Head of caudate nucleus (tissue), 42 donors: ENCODE measurements at regions of chr19 and their contacts with region 1.

Region 1: GRCh38 chr19:50329146-50329925 is at the start of gene KCNC3:
- DNase-seq: peak; percentile 98 to 100 (median 100)

Region 2: DNA sequence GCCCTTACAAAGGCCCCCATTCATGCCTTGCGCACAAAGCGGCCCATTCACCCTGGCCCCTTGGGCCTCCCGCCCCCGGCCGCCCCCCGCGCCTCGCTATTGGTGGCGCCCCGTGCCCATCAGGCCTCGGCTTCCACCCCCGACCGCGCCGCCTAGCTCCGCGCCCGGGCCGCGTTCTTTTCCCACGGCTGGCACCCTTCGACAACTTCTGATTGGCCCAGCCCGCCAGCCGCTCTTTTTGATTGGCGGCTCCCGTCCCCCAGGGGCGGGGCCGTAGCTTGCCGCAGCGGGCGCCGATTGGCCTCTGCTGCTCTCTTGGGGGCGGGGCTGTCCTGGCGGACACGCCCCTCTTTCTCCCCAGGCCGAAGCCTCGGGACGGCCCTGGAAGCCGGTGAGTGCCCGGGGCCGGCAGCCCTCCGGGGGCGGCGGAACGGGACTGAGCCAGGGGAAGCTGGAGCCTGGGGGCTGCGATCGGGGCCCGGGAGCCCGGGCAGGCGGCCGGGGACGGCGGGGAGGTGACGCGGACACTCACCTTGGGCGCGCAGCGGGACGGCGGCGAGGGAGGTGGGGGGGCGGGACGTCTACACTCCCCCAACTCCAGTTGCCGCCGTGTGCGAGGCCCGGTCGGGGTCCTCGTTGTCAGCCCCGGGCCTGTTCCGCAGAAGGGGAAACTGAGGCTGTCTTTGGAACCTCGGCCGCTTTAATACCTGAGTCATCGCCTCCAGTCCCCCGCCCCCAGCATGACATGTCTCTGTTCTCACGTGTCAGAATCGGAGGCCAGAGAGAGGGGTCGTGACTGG is 125.9 kb before region 1 on chr19 and contains the start of gene MYH14:
- intact Hi-C with region 1: loop called (anchors 5 kb)
- DNase-seq: peak; percentile 90 to 99 (median 98)

Region 3: GRCh38 chr19:50383852-50384684 is 54.7 kb after region 1 on chr19 and contains the start of gene POLD1:
- intact Hi-C with region 1: no loop called
- DNase-seq: peak; percentile 91 to 99 (median 96)